ENCODE measurements at regions of chr14 and their contacts with region 1.

Region 1: DNA sequence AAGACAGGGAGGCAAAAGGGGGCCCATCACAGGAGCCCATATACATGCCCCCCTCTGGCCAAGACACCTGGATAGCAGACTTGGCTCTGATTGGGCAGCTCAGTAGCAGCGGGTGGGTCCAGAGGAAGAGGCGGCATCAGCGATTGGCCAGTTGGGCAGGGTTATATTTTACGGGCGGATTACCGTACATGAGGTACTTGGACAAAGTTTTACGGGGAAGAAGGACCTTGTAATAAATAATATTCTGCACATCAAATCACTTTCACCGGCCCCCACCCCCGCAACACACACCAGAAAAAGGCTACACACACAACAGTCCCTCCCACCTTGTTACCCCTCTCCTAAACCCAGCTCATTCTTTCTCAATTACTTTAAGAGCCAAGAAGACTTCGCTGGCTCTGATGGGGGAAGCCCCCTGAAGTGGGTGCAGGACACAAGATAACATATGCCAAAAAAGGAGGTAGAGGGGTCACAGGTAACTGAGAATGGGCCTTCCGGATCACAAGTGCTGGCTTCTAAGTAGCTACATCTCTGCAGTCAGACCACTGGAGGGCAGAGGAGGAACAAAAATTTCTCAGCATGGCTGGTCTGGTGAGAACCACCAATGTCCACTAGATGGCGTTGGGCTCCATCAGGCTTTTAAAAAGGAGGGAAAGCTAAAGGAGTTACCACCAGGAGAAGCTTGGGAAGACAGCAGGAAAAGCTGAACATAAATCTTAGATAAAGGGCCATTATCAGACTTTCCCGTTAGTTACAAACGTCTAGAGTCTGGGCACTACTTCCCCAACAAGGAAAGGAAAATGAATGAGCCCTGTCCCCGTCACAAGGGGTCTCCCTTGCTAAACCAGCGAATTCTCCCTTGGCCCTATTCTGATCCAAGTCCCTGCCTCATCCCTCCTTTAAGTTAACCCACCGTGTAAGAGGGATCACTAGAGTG is 11.4 kb upstream of the CDH24 start:
- DNase-seq: peak; percentile 87
- H3K4me3 Mint-ChIP-seq: peak overlapping the region; percentile 22
- H3K27ac Mint-ChIP-seq: peak overlapping the region; percentile 69
- H3K4me1 Mint-ChIP-seq: peaks cover 37% of the 10 kb centered on the region
- H3K27me3 Mint-ChIP-seq: no peaks in the 10 kb centered on the region

Region 2: GRCh38 chr14:22986508-22987054 is 82.2 kb before region 1 on chr14:
- CTCF ChIA-PET with region 1: interaction called, 17 read pairs
- POLR2A ChIA-PET with region 1: interaction called, 3 read pairs
- DNase-seq: peak; percentile 94
- H3K4me3 Mint-ChIP-seq: no peak overlapping the region
- H3K27ac Mint-ChIP-seq: no peak overlapping the region
- H3K4me1 Mint-ChIP-seq: no peaks in the 10 kb centered on the region
- H3K27me3 Mint-ChIP-seq: no peaks in the 10 kb centered on the region

Region 3: GRCh38 chr14:22994762-22995275 is 73.9 kb before region 1 on chr14:
- CTCF ChIA-PET with region 1: interaction called, 12 read pairs
- POLR2A ChIA-PET with region 1: no interaction called
- DNase-seq: peak; percentile 45
- H3K4me3 Mint-ChIP-seq: no peak overlapping the region
- H3K27ac Mint-ChIP-seq: no peak overlapping the region
- H3K4me1 Mint-ChIP-seq: no peaks in the 10 kb centered on the region
- H3K27me3 Mint-ChIP-seq: no peaks in the 10 kb centered on the region

Region 4: DNA sequence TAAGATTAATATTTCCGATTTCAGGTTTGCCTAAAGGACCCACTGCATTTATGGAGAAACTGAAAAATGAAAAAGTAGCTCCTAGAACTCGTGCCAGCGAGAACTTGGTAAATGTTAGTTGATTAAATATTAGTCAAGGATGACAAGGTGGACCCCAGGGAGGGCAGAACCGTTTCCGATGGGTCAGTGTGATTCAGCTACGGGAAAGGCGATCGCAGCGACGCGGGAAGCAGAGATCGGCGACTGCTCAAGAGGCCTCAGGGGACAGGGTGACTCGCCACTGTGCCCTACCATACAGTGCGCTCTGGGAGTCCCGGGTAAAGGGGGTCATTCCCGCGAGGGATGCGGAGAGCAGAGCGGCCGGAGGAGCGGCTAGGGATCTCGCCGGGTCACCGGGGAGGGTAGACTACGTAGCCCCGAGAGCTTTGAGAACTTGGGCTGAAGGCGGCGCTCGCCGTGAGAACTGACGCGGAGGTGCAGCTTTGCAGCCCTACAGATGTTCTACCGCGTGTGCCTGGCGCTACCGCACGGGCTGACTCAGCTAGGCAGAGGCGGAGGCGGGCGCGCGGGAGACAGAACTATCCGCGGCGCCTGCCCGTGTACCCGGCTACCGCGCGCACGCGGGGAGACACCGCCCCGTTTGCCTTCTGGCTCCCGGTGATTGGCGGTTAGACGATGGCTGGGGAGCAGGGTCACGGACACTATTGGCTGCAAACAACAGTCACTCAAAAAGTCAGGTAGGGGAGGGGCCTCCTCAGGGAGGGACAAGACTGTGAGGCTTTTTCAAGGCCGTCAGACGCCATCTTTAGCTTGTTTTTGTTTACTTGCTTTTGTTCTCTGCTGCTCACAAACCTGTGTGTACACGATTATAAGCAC is 62.0 kb before region 1 on chr14:
- CTCF ChIA-PET with region 1: interaction called, 11 read pairs
- POLR2A ChIA-PET with region 1: no interaction called
- DNase-seq: peak; percentile 98
- H3K4me3 Mint-ChIP-seq: peak overlapping the region; percentile 91
- H3K27ac Mint-ChIP-seq: peak overlapping the region; percentile 92
- H3K4me1 Mint-ChIP-seq: peaks cover 50% of the 10 kb centered on the region
- H3K27me3 Mint-ChIP-seq: no peaks in the 10 kb centered on the region

Region 5: GRCh38 chr14:23085458-23085857 is 16.7 kb after region 1 on chr14:
- CTCF ChIA-PET with region 1: interaction called, 21 read pairs
- POLR2A ChIA-PET with region 1: no interaction called
- DNase-seq: no peak
- H3K4me3 Mint-ChIP-seq: no peak overlapping the region
- H3K27ac Mint-ChIP-seq: no peak overlapping the region
- H3K4me1 Mint-ChIP-seq: peaks cover 9% of the 10 kb centered on the region
- H3K27me3 Mint-ChIP-seq: no peaks in the 10 kb centered on the region

Region 6: GRCh38 chr14:23095196-23096108 is 26.7 kb after region 1 on chr14 and contains the start of gene C14orf119:
- CTCF ChIA-PET with region 1: interaction called, 21 read pairs
- POLR2A ChIA-PET with region 1: interaction called, 3 read pairs
- DNase-seq: peak; percentile 100
- H3K4me3 Mint-ChIP-seq: no peak within 1 kb of the TSS
- H3K27ac Mint-ChIP-seq: no peak within 1 kb of the TSS
- H3K4me1 Mint-ChIP-seq: peaks cover 34% of the 10 kb centered on the region
- H3K27me3 Mint-ChIP-seq: no peaks in the 10 kb centered on the region
- total RNA-seq, gene C14orf119: 48.0 to 48.2 TPM

Region 7: DNA sequence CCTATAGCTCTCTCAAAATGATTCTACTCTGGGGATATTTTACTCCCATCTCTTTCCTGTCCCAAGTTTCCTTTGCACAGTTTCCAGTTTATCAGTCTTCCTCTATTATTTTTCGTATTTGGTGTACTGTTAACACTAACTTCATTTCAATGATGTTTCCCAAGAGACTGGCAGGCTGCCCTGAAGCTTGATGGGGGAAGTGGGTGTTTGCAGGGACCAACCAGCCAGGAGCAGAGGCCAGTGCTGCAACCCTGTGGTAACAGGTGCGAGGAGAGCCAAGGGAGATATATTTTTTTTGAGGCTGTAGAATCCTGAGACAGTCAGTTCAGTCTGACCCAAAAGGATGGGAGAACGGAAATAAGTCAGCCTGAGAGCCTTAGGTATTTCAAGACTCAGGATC is 62.1 kb after region 1 on chr14:
- CTCF ChIA-PET with region 1: no interaction called
- POLR2A ChIA-PET with region 1: no interaction called
- DNase-seq: no peak
- H3K4me3 Mint-ChIP-seq: no peak overlapping the region
- H3K27ac Mint-ChIP-seq: no peak overlapping the region
- H3K4me1 Mint-ChIP-seq: peaks cover 10% of the 10 kb centered on the region
- H3K27me3 Mint-ChIP-seq: peaks cover 13% of the 10 kb centered on the region